ENCODE measurements at regions of chr20 and their contacts with region 1.

Region 1: GRCh38 chr20:25584905-25585704 is at the start of gene NINL:
- DNase-seq: peak; percentile 61
- H3K4me3 Mint-ChIP-seq: peak within 1 kb of the TSS; percentile 75
- H3K27ac Mint-ChIP-seq: peak within 1 kb of the TSS; percentile 1
- H3K4me1 Mint-ChIP-seq: peaks cover 10% of the 10 kb centered on the region
- H3K27me3 Mint-ChIP-seq: no peaks in the 10 kb centered on the region
- total RNA-seq, gene NINL: 2.7 to 3.9 TPM

Region 2: GRCh38 chr20:25508078-25508770 is 76.9 kb before region 1 on chr20:
- CTCF ChIA-PET with region 1: no interaction called
- POLR2A ChIA-PET with region 1: no interaction called
- intact Hi-C with region 1: no loop called
- DNase-seq: no peak
- H3K4me3 Mint-ChIP-seq: no peak overlapping the region
- H3K27ac Mint-ChIP-seq: no peak overlapping the region
- H3K4me1 Mint-ChIP-seq: no peaks in the 10 kb centered on the region
- H3K27me3 Mint-ChIP-seq: no peaks in the 10 kb centered on the region

Region 3: DNA sequence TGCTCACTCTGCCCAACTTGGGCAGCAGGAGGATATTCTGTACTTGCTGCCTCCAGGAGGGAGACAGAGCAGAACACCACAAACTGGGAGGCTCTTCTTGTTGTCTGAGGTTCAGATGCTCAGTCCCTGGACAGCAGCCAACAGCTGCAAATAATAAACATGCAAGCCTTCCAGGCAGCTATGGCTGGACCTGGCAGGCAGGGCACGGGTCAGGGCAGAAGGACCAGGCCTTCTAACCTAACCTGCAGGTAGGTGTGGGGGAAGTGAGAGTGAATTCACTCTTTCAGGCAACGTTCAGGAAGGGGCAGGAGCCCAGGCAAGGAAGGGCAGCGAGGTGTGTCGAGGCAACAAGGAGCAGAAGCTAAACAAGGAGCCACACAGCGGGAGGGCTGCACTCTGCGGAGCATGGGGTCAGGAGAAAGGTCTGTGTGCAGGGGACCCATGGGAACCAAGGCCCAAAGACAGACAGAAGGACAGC is 31.2 kb before region 1 on chr20:
- CTCF ChIA-PET with region 1: no interaction called
- POLR2A ChIA-PET with region 1: no interaction called
- intact Hi-C with region 1: no loop called
- DNase-seq: no peak
- H3K4me3 Mint-ChIP-seq: no peak overlapping the region
- H3K27ac Mint-ChIP-seq: no peak overlapping the region
- H3K4me1 Mint-ChIP-seq: no peaks in the 10 kb centered on the region
- H3K27me3 Mint-ChIP-seq: no peaks in the 10 kb centered on the region

Region 4: DNA sequence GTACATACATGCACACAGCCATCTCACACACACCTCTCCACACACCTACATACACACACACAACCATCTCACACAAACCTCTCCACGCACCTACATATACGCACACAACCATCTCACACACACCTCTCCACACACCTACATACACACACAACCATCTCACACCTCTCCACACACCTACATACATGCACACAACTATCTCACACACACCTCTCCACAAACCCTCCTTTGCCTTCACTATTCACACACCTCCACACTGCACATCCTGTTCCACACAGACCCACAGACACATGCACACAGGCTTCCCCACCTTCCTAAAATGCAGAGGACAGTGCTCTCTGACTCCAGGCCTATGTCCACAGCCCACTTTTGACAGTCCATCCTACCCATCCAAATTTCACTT is 16.6 kb after region 1 on chr20:
- CTCF ChIA-PET with region 1: no interaction called
- POLR2A ChIA-PET with region 1: no interaction called
- intact Hi-C with region 1: loop called (anchors 2 kb)
- DNase-seq: no peak
- H3K4me3 Mint-ChIP-seq: no peak overlapping the region
- H3K27ac Mint-ChIP-seq: no peak overlapping the region
- H3K4me1 Mint-ChIP-seq: peaks cover 8% of the 10 kb centered on the region
- H3K27me3 Mint-ChIP-seq: no peaks in the 10 kb centered on the region